Mammary epithelial cell (primary cell): ENCODE measurements at regions of chr12 and their contacts with region 1.

Region 1: GRCh38 chr12:105637470-105637869 is 307.0 kb downstream of the C12orf75 start:
- DNase-seq: no peak
- H3K4me3 ChIP-seq: no peak overlapping the region
- H3K27ac ChIP-seq: no peak overlapping the region
- H3K4me1 ChIP-seq: no peaks in the 10 kb centered on the region
- H3K27me3 ChIP-seq: no peaks in the 10 kb centered on the region
- CTCF ChIP-seq: no peak

Region 2: DNA sequence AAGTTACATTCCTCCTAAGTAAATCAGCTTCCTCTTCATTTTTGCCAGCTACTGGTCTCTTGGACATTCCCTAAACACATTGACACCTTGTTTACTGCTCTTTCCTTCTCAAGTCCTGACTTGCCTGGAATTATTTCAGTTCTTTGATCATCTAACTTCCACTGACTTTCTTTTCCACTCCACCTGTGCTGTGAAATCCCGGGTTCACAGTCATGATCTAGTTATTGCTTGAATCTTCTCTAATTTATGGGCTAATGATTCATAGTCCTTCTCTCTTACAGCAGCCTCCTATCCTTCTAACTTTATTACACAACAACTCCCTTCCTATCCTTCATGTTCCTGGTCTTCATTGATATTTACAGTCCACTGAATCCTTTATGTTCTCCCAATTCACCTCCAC is 46.9 kb before region 1 on chr12:
- CTCF ChIA-PET with region 1: no interaction called
- dilution Hi-C with region 1: no loop called
- in situ Hi-C with region 1: no loop called
- intact Hi-C with region 1: no loop called
- DNase-seq: peak; percentile 87
- H3K4me3 ChIP-seq: no peak overlapping the region
- H3K27ac ChIP-seq: no peak overlapping the region
- H3K4me1 ChIP-seq: peaks cover 17% of the 10 kb centered on the region
- H3K27me3 ChIP-seq: no peaks in the 10 kb centered on the region
- CTCF ChIP-seq: no peak

Region 3: DNA sequence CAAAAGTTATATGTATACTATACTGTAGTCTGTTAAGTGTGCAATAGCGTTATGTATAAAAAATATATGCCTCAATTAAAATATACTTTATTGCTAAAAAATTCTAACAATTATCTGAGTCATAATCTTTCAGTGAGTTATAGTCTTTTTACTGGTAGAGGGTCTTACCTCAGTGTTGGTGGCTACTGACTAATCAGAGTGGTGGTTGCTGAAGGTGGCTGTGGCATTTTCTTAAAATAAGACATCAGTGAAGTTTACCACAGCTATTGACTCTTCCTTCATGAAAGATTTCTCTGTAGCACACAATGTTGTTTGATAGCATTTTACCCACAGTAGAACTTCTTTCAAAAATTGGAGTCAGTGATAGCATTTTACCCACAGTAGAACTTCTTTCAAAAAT is 743.5 kb after region 1 on chr12:
- CTCF ChIA-PET with region 1: no interaction called
- dilution Hi-C with region 1: no loop called
- in situ Hi-C with region 1: no loop called
- intact Hi-C with region 1: loop called (anchors 5 kb)
- DNase-seq: no peak
- H3K4me3 ChIP-seq: no peak overlapping the region
- H3K27ac ChIP-seq: no peak overlapping the region
- H3K4me1 ChIP-seq: no peaks in the 10 kb centered on the region
- H3K27me3 ChIP-seq: no peaks in the 10 kb centered on the region
- CTCF ChIP-seq: no peak